HepG2 (cell line): ENCODE measurements at regions of chr11 and their contacts with region 1.

Region 1: GRCh38 chr11:17197431-17197898 is 10.3 kb downstream of the PIK3C2A start:
- DNase-seq: peak; percentile 93
- ATAC-seq: peak; percentile 96
- H3K4me3 ChIP-seq: peak overlapping the region in 1 of 3 experiments; percentile 33; a peak in 1 of 6 replicates
- H3K27ac ChIP-seq: peak overlapping the region; percentile 72
- H3K4me1 ChIP-seq: peaks cover 40% of the 10 kb centered on the region
- H3K27me3 ChIP-seq: no peaks in the 10 kb centered on the region
- CTCF ChIP-seq: no peak
- EP300 ChIP-seq: peak in 1 of 2 experiments; percentile 56; a peak in 1 of 4 replicates
- POLR2A ChIP-seq: no peak
- RAD21 ChIP-seq: no peak

Region 2: GRCh38 chr11:17164361-17165246 is 32.9 kb before region 1 on chr11:
- CTCF ChIA-PET with region 1: no interaction called
- POLR2A ChIA-PET with region 1: no interaction called
- in situ Hi-C with region 1: no loop called
- intact Hi-C with region 1: loop called (anchors 1 kb)
- DNase-seq: peak; percentile 53
- ATAC-seq: peak; percentile 59
- H3K4me3 ChIP-seq: no peak overlapping the region; a peak in 1 of 6 replicates
- H3K27ac ChIP-seq: peak overlapping the region; percentile 58
- H3K4me1 ChIP-seq: peaks cover 57% of the 10 kb centered on the region
- H3K27me3 ChIP-seq: no peaks in the 10 kb centered on the region
- CTCF ChIP-seq: no peak
- EP300 ChIP-seq: no peak
- POLR2A ChIP-seq: no peak
- RAD21 ChIP-seq: no peak

Region 3: DNA sequence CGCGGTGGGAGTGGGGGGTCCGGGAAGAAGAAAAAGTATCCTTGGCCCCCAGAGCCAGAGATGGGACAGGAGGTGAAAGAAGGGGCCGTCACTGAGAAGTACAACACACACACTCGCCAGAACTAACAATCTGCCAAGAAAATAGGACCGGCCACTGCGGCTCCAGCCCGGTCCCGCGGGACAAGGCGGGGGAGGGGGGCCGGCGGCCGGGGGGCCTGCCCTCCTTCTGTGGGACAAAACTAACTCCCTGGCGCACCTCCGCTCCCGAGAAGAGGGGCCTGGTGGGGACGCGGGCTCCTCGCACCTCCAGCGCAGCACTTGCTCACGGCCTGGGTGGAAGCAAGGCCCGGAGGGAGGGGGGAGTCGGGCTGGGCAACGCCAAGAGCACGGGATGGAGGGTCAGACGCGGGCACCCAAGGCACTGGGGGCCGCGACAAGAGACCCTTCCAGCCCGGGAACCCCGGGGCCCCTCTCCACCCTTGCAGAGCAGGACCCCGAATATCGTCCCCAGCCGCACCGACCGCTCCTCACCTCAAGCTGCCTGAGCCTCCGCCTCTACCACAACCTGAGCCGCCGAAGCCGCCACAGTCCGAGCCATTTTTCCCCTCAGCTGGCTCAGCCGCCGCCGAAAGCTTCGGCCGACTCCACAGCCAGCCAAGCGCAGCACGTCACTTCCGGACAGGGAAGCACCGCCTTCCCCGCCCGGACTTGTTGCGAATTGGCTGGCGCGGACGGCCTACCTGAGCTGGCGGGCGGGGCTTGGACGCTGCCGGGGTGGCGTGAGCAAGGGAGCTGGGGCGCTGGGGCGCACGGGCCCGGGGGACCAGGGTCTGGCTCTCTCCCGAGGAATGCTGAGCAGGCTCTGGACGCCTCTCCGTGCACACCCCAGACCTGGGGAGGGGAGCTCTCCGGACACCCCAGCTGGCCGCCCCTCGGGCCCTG is 10.1 kb after region 1 on chr11 and contains the start of gene PIK3C2A:
- CTCF ChIA-PET with region 1: no interaction called
- POLR2A ChIA-PET with region 1: interaction called, 17 read pairs
- in situ Hi-C with region 1: no loop called
- intact Hi-C with region 1: no loop called
- DNase-seq: peak; percentile 92
- ATAC-seq: peak; percentile 94
- H3K4me3 ChIP-seq: peak within 1 kb of the TSS; percentile 89 to 92 (median 91)
- H3K27ac ChIP-seq: peak within 1 kb of the TSS; percentile 99
- H3K4me1 ChIP-seq: peaks cover 52% of the 10 kb centered on the region
- H3K27me3 ChIP-seq: no peaks in the 10 kb centered on the region; a peak in 1 of 5 replicates
- CTCF ChIP-seq: no peak
- EP300 ChIP-seq: no peak
- POLR2A ChIP-seq: peak; percentile 98
- RAD21 ChIP-seq: no peak
- total RNA-seq, gene PIK3C2A: 49.9 and 117 TPM in 2 replicates